A549 (cell line): ENCODE measurements at regions of chr12 and their contacts with region 1.

Region 1: DNA sequence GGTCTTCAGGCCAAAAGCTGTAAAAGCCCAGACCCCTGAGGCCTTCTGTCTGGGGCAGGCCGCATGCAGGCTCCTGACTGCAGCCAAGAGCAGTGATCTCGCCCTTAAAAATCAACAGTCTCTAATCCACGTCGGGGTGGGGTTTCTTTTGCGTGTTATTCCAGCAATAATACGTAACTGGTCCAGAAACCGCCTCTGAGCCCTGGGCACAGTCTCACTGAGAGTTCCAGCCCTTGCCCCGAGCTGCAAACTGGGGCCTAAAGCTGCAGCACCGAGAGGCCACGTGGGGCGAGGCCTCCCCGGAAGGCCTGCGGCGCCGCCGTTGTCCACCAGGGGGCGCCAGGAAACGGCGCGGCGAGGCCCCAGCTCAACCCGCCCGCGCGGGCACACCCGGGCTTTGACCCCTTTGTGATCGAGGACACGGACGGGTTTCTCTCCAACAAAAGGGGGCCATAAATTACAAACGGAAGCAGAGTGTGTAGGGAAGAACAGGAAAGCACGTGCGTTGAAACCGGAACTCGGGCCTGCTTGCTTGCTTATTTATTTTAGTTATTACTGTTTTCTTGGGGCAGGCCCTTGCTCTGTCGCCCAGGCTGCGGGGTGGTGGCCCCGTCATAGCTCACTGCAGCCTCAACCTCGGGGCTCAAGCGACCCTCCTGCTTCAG is 87.2 kb downstream of the NINJ2 start:
- DNase-seq: peak; percentile 83 to 84
- ATAC-seq: peak; percentile 42 to 64; a peak in 5 of 6 replicates
- H3K4me3 ChIP-seq: no peak overlapping the region
- H3K27ac ChIP-seq: peak overlapping the region; percentile 82 to 97
- H3K4me1 ChIP-seq: peaks cover 63% of the 10 kb centered on the region
- CTCF ChIP-seq: peak; percentile 96
- EP300 ChIP-seq: no peak
- POLR2A ChIP-seq: peak; percentile 19
- RAD21 ChIP-seq: peak; percentile 84 to 96

Region 2: DNA sequence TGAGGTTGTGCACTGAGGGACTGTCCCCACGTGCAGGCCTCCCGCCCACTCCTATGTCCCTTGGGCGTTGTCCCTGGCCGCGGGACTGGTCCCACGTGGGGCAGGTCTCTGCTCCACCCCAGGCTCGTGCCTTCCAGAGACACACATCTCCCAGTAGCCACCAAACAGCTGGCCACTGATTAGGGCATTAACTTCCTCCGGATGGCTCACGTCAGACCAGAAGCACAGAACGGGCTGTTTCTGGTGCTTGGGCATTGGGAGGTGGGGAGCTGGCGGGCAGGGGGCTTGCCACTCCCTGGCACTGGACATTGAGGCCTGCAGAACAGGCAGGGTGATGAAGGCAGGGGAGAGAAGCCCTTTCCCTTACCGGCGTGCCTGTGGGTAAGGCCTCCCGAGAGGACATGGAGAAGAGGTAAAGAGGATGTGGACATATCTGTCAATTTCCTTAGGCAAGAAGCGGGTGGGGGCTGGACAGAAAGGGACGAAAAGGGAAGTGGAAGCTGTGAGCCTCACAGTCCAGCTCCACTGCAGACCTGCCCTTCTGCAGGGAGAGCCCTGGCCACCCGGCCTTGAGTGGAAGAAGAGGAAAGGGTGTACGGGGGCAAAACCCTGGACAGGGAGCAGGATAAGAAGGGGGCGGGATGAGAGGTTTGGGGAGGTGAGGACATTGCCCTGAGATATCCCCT is 14.0 kb before region 1 on chr12:
- CTCF ChIA-PET with region 1: interaction called, 10 read pairs
- POLR2A ChIA-PET with region 1: no interaction called
- DNase-seq: no peak
- ATAC-seq: no peak
- H3K4me3 ChIP-seq: no peak overlapping the region
- H3K27ac ChIP-seq: no peak overlapping the region
- H3K4me1 ChIP-seq: no peaks in the 10 kb centered on the region
- CTCF ChIP-seq: no peak
- EP300 ChIP-seq: no peak
- POLR2A ChIP-seq: no peak
- RAD21 ChIP-seq: no peak

Region 3: DNA sequence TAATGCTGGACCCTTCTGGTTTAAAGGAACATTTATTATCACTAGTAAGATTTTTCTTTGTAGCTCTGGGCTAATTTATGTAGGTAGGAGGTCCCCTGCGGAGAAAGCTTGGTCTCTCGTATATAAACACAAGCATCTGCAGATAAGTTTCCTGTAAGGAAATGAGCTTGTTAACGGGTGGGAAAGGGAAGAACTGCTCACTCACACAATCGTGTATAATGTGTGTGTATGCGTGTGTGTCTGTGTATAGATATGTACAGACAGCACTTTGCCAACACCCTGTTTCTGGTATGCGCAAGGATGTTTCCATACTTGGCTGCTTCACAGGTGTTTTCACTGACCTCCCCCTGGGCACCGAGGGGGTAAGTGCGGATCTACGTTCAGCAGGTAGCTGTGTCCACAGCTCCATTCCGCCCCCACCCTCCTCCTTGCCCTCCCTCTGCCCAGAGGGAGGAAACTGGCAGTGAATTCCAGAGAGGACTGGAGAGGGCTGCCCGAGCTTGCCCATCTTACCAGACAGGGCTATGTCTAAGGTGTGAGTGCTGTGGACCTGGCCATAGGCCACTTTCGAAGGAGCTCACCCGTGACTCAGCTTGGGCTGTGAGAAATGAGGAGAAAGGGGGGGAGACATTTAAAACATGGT is 22.0 kb after region 1 on chr12:
- CTCF ChIA-PET with region 1: interaction called, 34 read pairs
- POLR2A ChIA-PET with region 1: no interaction called
- DNase-seq: no peak
- ATAC-seq: peak in 1 of 2 experiments; percentile 53; a peak in 3 of 6 replicates
- H3K4me3 ChIP-seq: no peak overlapping the region
- H3K27ac ChIP-seq: peak overlapping the region in 1 of 2 experiments; percentile 8; a peak in 2 of 6 replicates
- H3K4me1 ChIP-seq: 0 out of 3 replicates have a peak, but pooled peaks cover 3% of the 10 kb centered on the region
- CTCF ChIP-seq: no peak
- EP300 ChIP-seq: no peak
- POLR2A ChIP-seq: no peak
- RAD21 ChIP-seq: no peak

Region 4: DNA sequence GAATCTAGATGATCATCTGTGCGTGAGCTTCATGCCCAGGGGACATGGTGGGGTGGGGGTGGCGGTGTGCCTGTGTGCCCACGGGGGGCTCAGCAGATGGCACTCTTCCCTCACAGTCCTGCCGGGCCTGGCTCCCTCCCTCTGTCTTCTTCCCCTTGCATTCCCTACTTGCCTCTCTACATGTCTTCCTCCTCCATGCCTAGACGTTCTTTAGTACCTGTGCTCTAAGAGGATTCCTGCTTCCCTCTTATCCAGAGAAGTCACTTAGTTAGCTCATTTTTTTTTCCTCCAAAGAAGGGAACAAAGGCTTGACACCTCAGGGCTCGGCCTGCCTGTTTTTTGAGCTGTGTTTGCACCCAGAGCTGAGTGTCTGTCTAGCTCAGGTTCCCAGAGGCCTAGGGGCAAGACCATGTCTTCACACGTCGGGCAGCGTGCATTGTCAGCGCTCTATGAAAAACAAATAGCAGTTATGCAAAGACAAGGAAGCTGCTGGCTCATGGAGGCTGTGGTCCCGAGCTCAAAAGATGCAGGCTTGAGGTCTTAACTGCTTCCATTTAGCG is 38.4 kb after region 1 on chr12:
- CTCF ChIA-PET with region 1: interaction called, 41 read pairs
- POLR2A ChIA-PET with region 1: interaction called, 3 read pairs
- DNase-seq: peak in 1 of 2 experiments; percentile 76
- ATAC-seq: peak; percentile 65 to 83; a peak in 5 of 6 replicates
- H3K4me3 ChIP-seq: no peak overlapping the region
- H3K27ac ChIP-seq: peak overlapping the region; percentile 71 to 75
- H3K4me1 ChIP-seq: peaks cover 30% of the 10 kb centered on the region
- CTCF ChIP-seq: peak; percentile 54
- EP300 ChIP-seq: no peak
- POLR2A ChIP-seq: no peak
- RAD21 ChIP-seq: peak; percentile 84 to 91

Region 5: GRCh38 chr12:642633-643474 is 66.8 kb after region 1 on chr12:
- CTCF ChIA-PET with region 1: interaction called, 18 read pairs
- POLR2A ChIA-PET with region 1: interaction called, 15 read pairs
- DNase-seq: peak; percentile 82 to 83
- ATAC-seq: peak; percentile 73 to 88
- H3K4me3 ChIP-seq: peak overlapping the region; percentile 50
- H3K27ac ChIP-seq: peak overlapping the region; percentile 98
- H3K4me1 ChIP-seq: peaks cover 49% of the 10 kb centered on the region
- CTCF ChIP-seq: peak; percentile 24; the same call in 2 of the 3 replicates
- EP300 ChIP-seq: no peak; a peak in 1 of 5 replicates
- POLR2A ChIP-seq: peak; percentile 24; the same call in 1 of the 2 replicates
- RAD21 ChIP-seq: peak in 1 of 2 experiments; percentile 13; a peak in 2 of 5 replicates

Region 6: DNA sequence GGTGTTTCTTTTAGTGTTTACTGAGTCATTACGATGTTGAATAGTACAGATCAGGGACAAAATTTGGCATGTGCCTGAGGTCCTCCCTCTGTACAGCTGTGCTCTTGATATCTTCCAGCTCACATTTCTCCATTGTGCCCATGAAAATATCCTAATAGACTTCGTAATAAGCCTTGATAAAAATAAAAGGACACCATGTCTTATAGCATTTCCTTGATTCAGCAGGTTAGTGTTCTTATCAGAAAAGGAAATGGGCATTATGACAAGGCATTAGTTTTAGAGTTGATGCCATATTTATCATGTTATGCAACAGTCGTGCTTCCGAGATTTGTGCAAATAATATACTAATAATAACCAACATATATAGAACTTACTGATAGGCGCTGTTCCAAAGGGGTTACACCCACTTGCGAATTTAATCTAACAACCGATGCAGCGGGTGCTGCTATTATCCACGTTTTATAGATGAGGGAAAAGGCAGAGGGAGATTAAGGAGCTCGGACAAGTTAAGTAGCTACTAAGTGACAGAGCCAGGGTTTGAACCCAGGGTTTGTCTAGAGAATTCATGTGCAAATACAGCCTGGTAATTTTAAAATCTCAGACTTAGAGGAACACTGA is 161.2 kb after region 1 on chr12:
- CTCF ChIA-PET with region 1: interaction called, 14 read pairs
- POLR2A ChIA-PET with region 1: no interaction called
- DNase-seq: no peak
- ATAC-seq: no peak
- H3K4me3 ChIP-seq: no peak overlapping the region
- H3K27ac ChIP-seq: no peak overlapping the region
- H3K4me1 ChIP-seq: no peaks in the 10 kb centered on the region
- CTCF ChIP-seq: no peak
- EP300 ChIP-seq: no peak
- POLR2A ChIP-seq: no peak
- RAD21 ChIP-seq: no peak

Region 7: GRCh38 chr12:818733-819132 is 242.7 kb after region 1 on chr12:
- CTCF ChIA-PET with region 1: interaction called, 78 read pairs
- POLR2A ChIA-PET with region 1: no interaction called
- DNase-seq: peak in 1 of 2 experiments; percentile 19
- ATAC-seq: no peak; a peak in 1 of 6 replicates
- H3K4me3 ChIP-seq: no peak overlapping the region
- H3K27ac ChIP-seq: peak overlapping the region in 1 of 2 experiments; percentile 39; a peak in 2 of 6 replicates
- H3K4me1 ChIP-seq: peaks cover 32% of the 10 kb centered on the region
- CTCF ChIP-seq: no peak
- EP300 ChIP-seq: no peak
- POLR2A ChIP-seq: no peak
- RAD21 ChIP-seq: no peak